ENCODE measurements at regions of chr20 and their contacts with region 1.

Region 1: DNA sequence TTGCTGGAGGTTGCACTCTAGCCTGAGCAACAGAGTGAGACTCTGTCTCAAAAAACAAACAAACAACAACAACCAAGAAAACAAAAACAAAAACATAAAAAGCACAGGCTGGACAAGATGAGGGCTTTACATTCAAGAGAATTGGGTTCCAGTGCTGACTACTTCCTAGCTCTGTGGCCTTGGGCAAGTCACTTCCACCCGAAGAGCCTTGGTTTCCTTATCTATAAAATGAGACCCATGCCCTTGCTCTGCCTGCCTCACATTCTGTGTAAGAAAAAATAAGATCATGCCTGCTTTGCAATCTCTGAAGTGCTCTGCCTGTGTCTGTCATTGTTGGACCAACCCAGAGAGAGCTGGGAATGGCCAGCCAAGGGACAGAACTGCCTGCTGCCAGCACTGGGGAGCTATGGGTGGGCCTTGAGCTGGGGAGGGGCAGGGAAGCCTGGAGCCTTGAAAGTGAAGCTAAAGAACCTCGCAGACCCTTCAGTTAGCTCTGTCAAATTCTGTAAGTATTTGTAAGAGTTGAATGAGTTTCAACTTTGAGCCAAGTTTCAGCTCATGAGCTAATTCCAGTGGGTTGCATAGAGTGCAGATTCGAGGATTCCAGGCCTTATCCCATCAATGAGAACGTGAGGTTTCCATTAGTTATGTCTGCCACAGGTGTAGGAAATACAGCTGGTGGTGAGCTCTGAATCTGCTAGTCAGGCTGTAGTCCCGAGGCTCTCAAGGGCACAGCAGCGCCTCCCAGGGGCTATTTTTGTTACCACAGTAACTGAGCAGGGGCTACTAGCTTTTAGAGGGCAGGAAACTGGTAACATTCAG is 93.2 kb downstream of the DLGAP4 start:
- DNase-seq: peak; percentile 91
- ATAC-seq: peak; percentile 97
- H3K4me3 ChIP-seq: no peak overlapping the region
- H3K27ac ChIP-seq: no peak overlapping the region
- H3K4me1 ChIP-seq: peaks cover 0 to 7% of the 10 kb centered on the region in 2 experiments; a peak in 1 of 4 replicates
- H3K27me3 ChIP-seq: no peaks in the 10 kb centered on the region
- CTCF ChIP-seq: peak; percentile 80 to 91 (median 85)
- POLR2A ChIP-seq: no peak
- RAD21 ChIP-seq: peak; percentile 83

Region 2: GRCh38 chr20:36154700-36155628 is 244.4 kb before region 1 on chr20 and contains the start of gene EPB41L1:
- CTCF ChIA-PET with region 1: interaction called, 4 read pairs
- POLR2A ChIA-PET with region 1: no interaction called
- RAD21 ChIA-PET with region 1: no interaction called
- intact Hi-C with region 1: loop called (anchors 1 kb)
- DNase-seq: no peak
- ATAC-seq: peak; percentile 44
- H3K4me3 ChIP-seq: peak within 1 kb of the TSS; percentile 53 to 64
- H3K27ac ChIP-seq: peak within 1 kb of the TSS; percentile 44; the same call in 1 of the 2 replicates
- H3K4me1 ChIP-seq: peaks cover 14 to 27% of the 10 kb centered on the region in 2 experiments
- H3K27me3 ChIP-seq: no peaks in the 10 kb centered on the region
- CTCF ChIP-seq: no peak
- POLR2A ChIP-seq: no peak
- RAD21 ChIP-seq: no peak
- total RNA-seq, gene EPB41L1: 42.1 TPM

Region 3: GRCh38 chr20:36214684-36215256 is 184.6 kb before region 1 on chr20:
- CTCF ChIA-PET with region 1: interaction called, 8 read pairs
- POLR2A ChIA-PET with region 1: no interaction called
- RAD21 ChIA-PET with region 1: no interaction called
- intact Hi-C with region 1: loop called (anchors 1 kb)
- DNase-seq: no peak
- ATAC-seq: peak; percentile 70
- H3K4me3 ChIP-seq: no peak overlapping the region
- H3K27ac ChIP-seq: no peak overlapping the region
- H3K4me1 ChIP-seq: peaks cover 3 to 5% of the 10 kb centered on the region in 2 experiments; a peak in 2 of 4 replicates
- H3K27me3 ChIP-seq: no peaks in the 10 kb centered on the region
- CTCF ChIP-seq: peak; percentile 65 to 79 (median 76)
- POLR2A ChIP-seq: no peak
- RAD21 ChIP-seq: peak; percentile 75

Region 4: DNA sequence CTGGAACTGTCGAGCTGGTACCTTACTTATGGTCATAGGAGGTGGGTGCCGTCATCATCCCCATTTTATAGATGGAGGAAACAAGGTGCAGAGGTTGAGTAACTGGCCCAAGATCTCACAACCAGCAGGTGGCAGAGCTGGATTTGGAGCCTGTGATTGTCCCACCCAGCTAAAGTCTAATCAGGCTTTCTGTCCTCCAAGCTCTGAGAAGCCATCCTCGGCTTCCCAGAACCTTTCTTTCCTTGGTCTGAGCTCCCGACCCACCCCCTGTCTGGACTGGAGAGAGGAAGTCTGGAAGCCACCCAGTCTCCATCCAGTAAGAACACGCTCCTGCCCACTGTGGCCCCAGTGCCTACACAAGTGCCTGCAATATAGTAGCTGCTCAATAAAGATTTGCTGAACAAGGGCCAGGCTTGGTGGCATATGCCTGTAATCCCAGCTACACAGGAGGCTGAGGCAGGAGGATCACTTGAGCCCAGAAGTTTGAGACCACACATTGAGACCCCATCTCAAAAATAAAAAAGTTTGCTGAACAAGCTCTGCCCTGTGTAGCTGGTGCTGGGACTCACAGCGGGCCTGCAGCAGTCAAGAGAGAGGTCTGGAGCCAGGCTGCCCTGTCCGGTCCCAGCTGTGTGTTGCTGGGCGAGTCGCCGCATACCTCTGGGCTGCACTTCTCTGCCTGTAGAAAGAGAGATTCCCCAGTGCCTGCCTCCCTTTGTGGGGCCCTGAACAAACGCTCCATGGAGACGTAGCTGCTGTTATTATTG is 125.8 kb before region 1 on chr20:
- CTCF ChIA-PET with region 1: interaction called, 57 read pairs
- POLR2A ChIA-PET with region 1: no interaction called
- RAD21 ChIA-PET with region 1: interaction called, 6 to 7 read pairs
- intact Hi-C with region 1: no loop called
- DNase-seq: peak; percentile 4
- ATAC-seq: peak; percentile 68
- H3K4me3 ChIP-seq: no peak overlapping the region
- H3K27ac ChIP-seq: no peak overlapping the region
- H3K4me1 ChIP-seq: no peaks in the 10 kb centered on the region
- H3K27me3 ChIP-seq: no peaks in the 10 kb centered on the region
- CTCF ChIP-seq: peak; percentile 42 to 48 (median 47); a peak in 5 of 6 replicates
- POLR2A ChIP-seq: no peak
- RAD21 ChIP-seq: peak; percentile 66